Calu3 (cell line): ENCODE measurements at regions of chrX and their contacts with region 1.

Region 1: DNA sequence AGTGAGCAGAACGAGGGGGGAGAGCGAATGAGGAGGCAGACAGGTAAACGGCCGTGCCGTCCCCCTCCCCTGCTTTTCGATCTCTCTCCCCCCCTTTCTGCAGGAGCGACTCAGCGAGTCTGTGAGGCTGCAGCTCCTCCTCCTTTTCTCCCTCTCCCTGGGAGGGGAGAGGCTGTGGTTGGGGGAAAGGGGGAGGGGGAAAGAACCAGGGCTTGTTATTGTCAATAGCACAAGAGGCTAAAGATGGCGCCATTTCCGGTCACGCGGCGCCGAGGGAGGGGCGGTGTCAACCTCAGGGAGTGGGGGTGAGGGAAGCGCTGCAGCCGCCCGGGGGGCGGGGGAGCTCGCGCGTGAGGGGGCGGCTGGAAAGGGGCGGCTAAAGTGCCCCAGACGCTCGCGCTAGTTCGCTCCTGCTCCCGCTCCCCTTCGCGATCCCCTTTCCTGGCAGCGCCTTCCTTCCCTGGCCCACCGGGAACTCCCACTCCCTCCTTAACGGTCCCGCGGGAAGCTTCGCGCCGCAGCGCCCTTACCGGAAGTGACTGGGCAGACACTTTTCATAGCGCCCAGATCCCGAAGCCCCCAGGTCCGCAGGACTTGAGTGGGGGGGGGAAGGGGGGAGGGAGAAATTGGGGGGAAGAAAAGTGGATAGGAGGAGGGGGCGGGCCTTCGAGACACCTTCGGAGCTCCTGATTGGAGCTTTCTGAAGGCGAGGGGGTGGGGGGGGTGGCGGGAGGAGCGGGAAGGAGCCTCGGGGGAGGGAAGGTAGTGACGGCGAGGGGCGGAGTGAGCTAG is at the start of gene CUL4B:
- DNase-seq: peak; percentile 91
- H3K4me3 Mint-ChIP-seq: peak within 1 kb of the TSS; percentile 76
- H3K27ac Mint-ChIP-seq: peak within 1 kb of the TSS; percentile 58
- H3K4me1 Mint-ChIP-seq: peaks cover 9% of the 10 kb centered on the region
- H3K27me3 Mint-ChIP-seq: no peaks in the 10 kb centered on the region
- CTCF ChIP-seq: no peak
- total RNA-seq, gene CUL4B: 32.8 and 35.2 TPM in 2 replicates

Region 2: DNA sequence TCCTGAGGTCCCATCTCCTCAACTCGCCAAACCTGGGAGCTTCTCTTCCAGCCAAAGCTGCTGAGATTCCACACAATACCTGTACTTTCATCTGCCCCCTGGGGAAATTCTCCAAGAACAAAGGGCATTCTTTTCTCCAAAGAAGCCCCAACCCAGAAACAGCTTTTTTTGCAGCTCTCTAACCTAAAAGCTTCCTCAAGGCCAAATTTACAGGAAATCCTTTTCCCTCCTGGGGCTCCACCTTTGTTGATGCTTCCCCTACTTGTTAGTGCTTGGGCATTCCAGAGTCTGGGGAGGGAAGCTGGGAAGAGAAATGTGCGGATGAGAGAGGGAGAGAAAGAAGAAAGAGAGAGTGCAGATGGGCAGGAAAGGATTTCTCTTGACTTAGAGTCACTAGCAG is 286.1 kb before region 1 on chrX:
- CTCF ChIA-PET with region 1: no interaction called
- intact Hi-C with region 1: no loop called
- DNase-seq: no peak
- H3K4me3 Mint-ChIP-seq: no peak overlapping the region
- H3K27ac Mint-ChIP-seq: no peak overlapping the region
- H3K4me1 Mint-ChIP-seq: no peaks in the 10 kb centered on the region
- H3K27me3 Mint-ChIP-seq: peaks cover 13% of the 10 kb centered on the region
- CTCF ChIP-seq: no peak

Region 3: GRCh38 chrX:120603707-120604360 is 42.8 kb after region 1 on chrX and contains the start of gene MCTS1:
- CTCF ChIA-PET with region 1: interaction called, 3 read pairs
- intact Hi-C with region 1: loop called (anchors 2 kb)
- DNase-seq: peak; percentile 85
- H3K4me3 Mint-ChIP-seq: peak within 1 kb of the TSS; percentile 83
- H3K27ac Mint-ChIP-seq: peak within 1 kb of the TSS; percentile 94
- H3K4me1 Mint-ChIP-seq: no peaks in the 10 kb centered on the region
- H3K27me3 Mint-ChIP-seq: peaks cover 1% of the 10 kb centered on the region
- CTCF ChIP-seq: no peak
- total RNA-seq, gene MCTS1: 64.7 and 67.7 TPM in 2 replicates

Region 4: DNA sequence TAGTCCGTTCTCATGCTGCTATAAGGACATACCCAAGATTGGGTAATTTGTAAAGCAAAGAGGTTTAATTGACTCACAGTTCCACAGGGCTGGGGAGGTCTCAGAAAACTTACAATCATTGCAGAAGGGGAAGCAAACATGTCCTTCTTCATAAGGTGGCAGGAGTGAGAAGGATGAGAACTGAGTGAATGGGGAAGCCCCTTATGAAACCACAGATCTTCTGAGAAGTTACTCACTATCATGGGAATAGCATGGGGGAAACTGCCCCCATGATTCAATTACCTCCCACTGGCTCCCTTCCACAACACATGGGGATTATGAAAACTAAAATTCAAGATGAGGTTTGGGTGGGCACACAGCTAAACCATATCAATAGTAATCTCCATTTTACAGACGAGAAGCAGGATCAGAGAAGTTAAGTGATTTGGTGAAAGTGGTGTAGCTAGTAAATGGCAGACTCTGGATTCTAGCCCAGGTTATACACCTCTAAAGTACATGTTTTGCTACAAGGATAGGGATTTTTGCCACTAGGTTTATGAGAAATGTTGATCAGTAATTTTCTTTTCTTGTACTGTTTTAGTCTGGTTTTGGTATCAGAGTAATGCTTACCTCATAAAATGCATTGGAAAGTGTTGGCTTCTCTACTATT is 116.1 kb after region 1 on chrX:
- CTCF ChIA-PET with region 1: no interaction called
- intact Hi-C with region 1: no loop called
- DNase-seq: no peak
- H3K4me3 Mint-ChIP-seq: no peak overlapping the region
- H3K27ac Mint-ChIP-seq: no peak overlapping the region
- H3K4me1 Mint-ChIP-seq: peaks cover 16% of the 10 kb centered on the region
- H3K27me3 Mint-ChIP-seq: no peaks in the 10 kb centered on the region
- CTCF ChIP-seq: no peak